Mucosa of descending colon (tissue), 3 donors: ENCODE measurements at regions of chr1 and their contacts with region 1.

Region 1: DNA sequence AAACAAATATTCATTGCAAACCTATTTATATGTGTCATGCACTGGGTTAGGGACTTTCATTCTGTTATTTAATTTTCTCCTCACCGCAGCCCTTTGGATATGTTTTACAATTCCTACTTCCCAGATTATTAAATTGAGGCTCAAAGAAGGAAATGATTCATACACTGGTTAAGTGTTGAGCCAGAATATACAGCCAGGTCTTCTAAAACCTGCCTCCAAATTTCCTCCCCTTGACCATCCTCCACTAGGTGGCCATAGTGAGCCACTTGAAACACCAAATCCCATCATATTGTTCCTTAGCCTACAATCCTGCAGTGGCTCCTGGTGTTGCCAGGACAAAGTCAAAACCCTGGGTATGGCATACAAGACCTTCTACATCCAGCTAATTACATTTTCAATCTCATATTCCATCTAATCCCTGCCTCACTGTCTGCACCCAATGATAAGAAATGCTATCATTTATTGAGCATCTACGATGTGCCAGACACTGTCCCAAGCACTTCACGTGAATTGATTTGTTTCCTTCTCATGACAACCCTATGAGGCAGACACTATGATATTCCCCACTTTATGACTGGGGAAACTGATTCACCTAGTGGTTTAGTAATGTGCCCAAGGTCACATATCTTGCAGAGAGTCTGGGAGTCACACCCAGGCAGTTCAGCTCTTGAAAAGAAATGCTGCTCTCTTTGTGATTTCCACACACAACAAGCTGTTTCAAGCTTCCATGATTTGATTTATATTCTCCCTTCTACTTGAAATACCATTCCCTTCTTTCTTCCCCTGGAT is 23.6 kb upstream of the KIRREL1 start:
- DNase-seq: peak in 1 of 3 donors; percentile 77
- ATAC-seq: peak; percentile 66
- H3K4me3 ChIP-seq: no peak overlapping the region
- H3K4me1 ChIP-seq: peaks cover 20% of the 10 kb centered on the region
- CTCF ChIP-seq: peak; percentile 49

Region 2: GRCh38 chr1:158028969-158029368 is 59.1 kb after region 1 on chr1:
- intact Hi-C with region 1: loop called in 1 of 2 experiments (anchors 10 kb)
- DNase-seq: no peak
- ATAC-seq: no peak
- H3K4me3 ChIP-seq: no peak overlapping the region
- H3K4me1 ChIP-seq: no peaks in the 10 kb centered on the region
- CTCF ChIP-seq: no peak

Region 3: GRCh38 chr1:158124999-158125398 is 155.1 kb after region 1 on chr1:
- intact Hi-C with region 1: loop called (anchors 5 kb)
- DNase-seq: peak; percentile 68 to 96 (median 81)
- ATAC-seq: peak; percentile 96
- H3K4me3 ChIP-seq: no peak overlapping the region
- H3K4me1 ChIP-seq: no peaks in the 10 kb centered on the region
- CTCF ChIP-seq: peak; percentile 79